ENCODE measurements at regions of chr1 and their contacts with region 1.

Region 1: GRCh38 chr1:156705918-156706656 is 704 bp upstream of the CRABP2 start:
- DNase-seq: peak; percentile 67 to 72 (median 70)
- H3K4me3 ChIP-seq: peak overlapping the region; percentile 63 to 65
- H3K4me3 Mint-ChIP-seq: peak overlapping the region; percentile 88 to 96 (median 89)
- H3K27ac ChIP-seq: peak overlapping the region; percentile 63
- H3K27ac Mint-ChIP-seq: peak overlapping the region; percentile 84 to 94 (median 93)
- H3K4me1 ChIP-seq: peaks cover 32% of the 10 kb centered on the region
- H3K4me1 Mint-ChIP-seq: peaks cover 8 to 47% (median 24%) of the 10 kb centered on the region in 4 donors
- H3K27me3 ChIP-seq: peaks cover 6% of the 10 kb centered on the region
- H3K27me3 Mint-ChIP-seq: peaks cover 6 to 9% of the 10 kb centered on the region in 2 donors

Region 2: DNA sequence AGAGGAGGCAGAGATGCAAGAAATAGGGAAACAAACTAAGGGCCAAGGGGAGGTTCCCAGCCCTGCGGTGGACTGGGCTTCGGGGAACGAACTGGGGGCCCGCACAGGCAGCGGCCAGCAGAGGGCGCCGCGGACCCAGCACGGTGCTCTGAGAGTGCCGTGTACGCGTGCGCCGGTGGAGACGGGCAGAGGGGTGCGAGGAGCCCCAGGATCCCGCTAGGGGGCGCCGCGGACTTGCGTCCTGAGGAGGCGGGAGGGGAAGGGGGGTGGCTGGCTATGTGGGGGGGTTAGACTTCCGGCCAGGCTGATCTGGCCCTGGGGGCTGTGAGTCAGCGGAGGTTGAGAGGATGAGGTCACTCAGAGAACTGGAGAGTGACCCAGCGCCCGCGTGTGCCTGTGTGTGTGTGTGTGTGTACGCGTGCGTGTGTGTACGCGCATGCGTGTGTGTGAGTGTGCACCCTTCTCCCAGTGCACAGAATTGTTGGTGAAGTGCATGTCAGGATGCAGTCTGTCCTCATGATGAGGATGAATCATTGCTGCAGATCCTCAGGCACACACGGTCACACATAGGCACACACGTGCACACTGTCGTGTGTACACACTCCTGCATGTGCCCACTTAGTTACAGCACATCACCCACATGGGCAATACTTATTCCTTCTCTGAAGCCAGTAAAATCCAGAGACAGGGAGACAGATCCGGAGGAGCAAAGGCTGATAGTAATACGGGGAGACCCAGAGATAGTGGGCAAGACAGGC is 45.9 kb before region 1 on chr1:
- CTCF ChIA-PET with region 1: interaction called, 23 read pairs
- POLR2A ChIA-PET with region 1: interaction called, 9 read pairs
- intact Hi-C with region 1: loop called (anchors 1 kb)
- DNase-seq: peak; percentile 87 to 90 (median 88)
- H3K4me3 ChIP-seq: peak overlapping the region in 1 of 2 donors; percentile 9
- H3K4me3 Mint-ChIP-seq: peak overlapping the region; percentile 45 to 74 (median 60)
- H3K27ac ChIP-seq: no peak overlapping the region
- H3K27ac Mint-ChIP-seq: peak overlapping the region in 6 of 7 donors; percentile 69 to 90 (median 84)
- H3K4me1 ChIP-seq: peaks cover 64% of the 10 kb centered on the region
- H3K4me1 Mint-ChIP-seq: peaks cover 30 to 69% (median 46%) of the 10 kb centered on the region in 4 donors
- H3K27me3 ChIP-seq: peaks cover 10% of the 10 kb centered on the region
- H3K27me3 Mint-ChIP-seq: peaks cover 18 to 22% of the 10 kb centered on the region in 2 donors

Region 3: GRCh38 chr1:156677616-156678596 is 28.2 kb before region 1 on chr1:
- CTCF ChIA-PET with region 1: interaction called, 13 read pairs
- POLR2A ChIA-PET with region 1: no interaction called
- intact Hi-C with region 1: no loop called
- DNase-seq: peak in 4 of 5 donors; percentile 28 to 37 (median 32)
- H3K4me3 ChIP-seq: no peak overlapping the region
- H3K4me3 Mint-ChIP-seq: peak overlapping the region in 7 of 8 donors; percentile 46 to 74 (median 54)
- H3K27ac ChIP-seq: no peak overlapping the region
- H3K27ac Mint-ChIP-seq: peak overlapping the region in 3 of 7 donors; percentile 21 to 69 (median 60)
- H3K4me1 ChIP-seq: peaks cover 14% of the 10 kb centered on the region
- H3K4me1 Mint-ChIP-seq: peaks cover 1 to 14% (median 12%) of the 10 kb centered on the region in 4 donors
- H3K27me3 ChIP-seq: peaks cover 34% of the 10 kb centered on the region
- H3K27me3 Mint-ChIP-seq: peaks cover 40 to 50% of the 10 kb centered on the region in 2 donors

Region 4: DNA sequence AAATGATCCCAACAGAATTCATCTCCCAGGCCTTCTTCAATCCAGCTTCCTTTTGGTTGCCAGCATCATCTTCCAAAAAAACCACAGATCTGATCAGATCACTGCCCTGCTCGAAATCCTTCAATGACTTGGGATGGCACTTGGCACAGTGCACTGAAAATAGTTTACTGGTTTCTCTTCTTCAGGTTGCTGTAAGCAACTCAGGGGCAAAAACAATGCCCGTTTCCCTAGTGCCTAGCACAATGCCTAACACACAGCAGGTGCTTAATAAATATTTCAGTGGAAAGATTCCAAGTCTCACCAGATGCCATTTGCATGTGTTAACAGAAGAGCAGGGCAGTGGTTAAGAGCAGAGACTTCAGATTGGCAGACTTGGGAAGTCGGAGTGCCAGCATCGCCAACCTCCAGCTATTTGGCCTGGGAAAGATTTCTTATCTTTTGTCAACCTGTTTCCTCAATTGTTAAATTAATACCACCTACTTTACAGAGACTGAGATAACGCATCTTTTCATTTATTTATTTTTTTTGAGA is 11.3 kb after region 1 on chr1:
- CTCF ChIA-PET with region 1: interaction called, 25 read pairs
- POLR2A ChIA-PET with region 1: interaction called, 6 read pairs
- intact Hi-C with region 1: no loop called
- DNase-seq: no peak
- H3K4me3 ChIP-seq: no peak overlapping the region
- H3K4me3 Mint-ChIP-seq: no peak overlapping the region
- H3K27ac ChIP-seq: no peak overlapping the region
- H3K27ac Mint-ChIP-seq: no peak overlapping the region
- H3K4me1 ChIP-seq: no peaks in the 10 kb centered on the region
- H3K4me1 Mint-ChIP-seq: peaks cover 3 to 10% (median 6%) of the 10 kb centered on the region in 4 donors
- H3K27me3 ChIP-seq: no peaks in the 10 kb centered on the region
- H3K27me3 Mint-ChIP-seq: no peaks in the 10 kb centered on the region

Region 5: DNA sequence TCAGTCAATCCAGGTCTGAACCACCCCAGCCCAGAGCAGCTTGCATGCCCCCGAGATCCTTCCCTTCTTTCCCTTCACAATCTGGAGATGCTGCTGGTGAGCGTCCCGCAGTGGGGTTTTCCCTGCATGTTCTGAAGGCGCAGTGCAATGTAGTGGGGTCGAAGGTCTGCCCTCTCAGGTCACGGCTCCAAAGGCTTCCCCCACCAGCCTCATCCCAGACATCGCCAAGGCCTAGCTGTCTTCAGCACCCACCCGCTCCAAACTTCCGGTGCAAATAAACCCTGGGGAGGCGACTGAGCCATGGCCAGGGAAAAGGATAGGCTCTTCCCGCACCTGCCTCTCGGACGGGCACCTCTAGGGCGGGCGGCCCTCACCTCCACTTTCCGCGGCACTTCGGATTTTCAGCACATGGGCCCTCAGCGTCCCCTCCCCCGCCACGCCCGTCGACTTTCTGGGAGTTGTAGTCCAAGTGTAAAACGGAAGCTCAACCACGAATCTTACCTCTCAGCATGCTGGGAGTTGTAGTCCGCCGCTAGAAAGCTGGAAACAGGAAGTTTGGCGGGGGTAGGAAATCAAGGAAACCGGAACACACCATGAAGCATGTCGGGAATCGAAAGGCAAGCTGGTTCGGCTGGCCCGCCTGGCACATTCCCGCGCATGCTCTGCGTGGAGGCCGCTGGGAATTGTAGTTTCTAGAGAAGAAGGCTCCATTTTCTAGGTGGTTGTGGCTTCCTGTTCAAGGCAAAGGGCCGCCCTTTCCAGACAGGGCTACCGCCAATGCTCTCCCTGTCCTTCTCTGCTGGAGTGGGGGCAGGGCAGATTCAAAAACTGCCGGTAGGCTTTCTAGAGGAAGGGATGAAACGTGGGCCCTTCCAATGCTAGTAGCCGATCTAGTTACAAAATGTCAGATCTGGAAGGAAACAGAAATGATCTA is 34.9 kb after region 1 on chr1 and contains the start of gene MRPL24:
- CTCF ChIA-PET with region 1: interaction called, 3 read pairs
- POLR2A ChIA-PET with region 1: interaction called, 11 read pairs
- intact Hi-C with region 1: no loop called
- DNase-seq: peak; percentile 96 to 100 (median 99)
- H3K4me3 ChIP-seq: peak within 1 kb of the TSS; percentile 83 to 89
- H3K4me3 Mint-ChIP-seq: peak within 1 kb of the TSS; percentile 94 to 99 (median 96)
- H3K27ac ChIP-seq: peak within 1 kb of the TSS; percentile 84
- H3K27ac Mint-ChIP-seq: peak within 1 kb of the TSS; percentile 91 to 100 (median 98)
- H3K4me1 ChIP-seq: peaks cover 25% of the 10 kb centered on the region
- H3K4me1 Mint-ChIP-seq: peaks cover 18 to 45% (median 32%) of the 10 kb centered on the region in 4 donors
- H3K27me3 ChIP-seq: no peaks in the 10 kb centered on the region
- H3K27me3 Mint-ChIP-seq: no peaks in the 10 kb centered on the region
- total RNA-seq, gene MRPL24: 44.1 to 47.4 TPM